ENCODE measurements at regions of chr15 and their contacts with region 1.

Region 1: DNA sequence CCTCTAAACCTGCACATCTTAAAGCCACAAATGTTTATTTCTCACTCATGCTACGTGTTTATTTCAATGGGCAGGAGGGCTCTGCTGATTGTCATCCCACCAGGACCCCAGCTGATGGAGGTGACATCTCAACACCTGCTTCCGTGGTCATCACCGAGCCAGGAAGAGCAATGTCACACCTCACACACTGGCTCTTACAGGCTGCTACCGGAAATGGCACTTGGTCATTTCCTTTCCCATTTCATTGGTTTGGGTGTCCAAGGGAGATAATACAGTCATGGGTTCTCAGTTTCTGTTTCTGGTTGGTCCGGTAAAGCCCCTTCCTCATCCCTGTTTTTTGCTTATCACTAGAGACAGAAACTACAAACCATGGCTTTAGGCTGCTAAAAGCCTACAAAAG is 41.9 kb downstream of the ABHD2 start:
- DNase-seq: no peak
- H3K4me3 ChIP-seq: no peak overlapping the region
- H3K27ac ChIP-seq: peak overlapping the region; percentile 3 to 39
- H3K4me1 ChIP-seq: peaks cover 0 to 94% (median 18%) of the 10 kb centered on the region in 4 donors
- H3K27me3 ChIP-seq: no peaks in the 10 kb centered on the region
- CTCF ChIP-seq: no peak

Region 2: DNA sequence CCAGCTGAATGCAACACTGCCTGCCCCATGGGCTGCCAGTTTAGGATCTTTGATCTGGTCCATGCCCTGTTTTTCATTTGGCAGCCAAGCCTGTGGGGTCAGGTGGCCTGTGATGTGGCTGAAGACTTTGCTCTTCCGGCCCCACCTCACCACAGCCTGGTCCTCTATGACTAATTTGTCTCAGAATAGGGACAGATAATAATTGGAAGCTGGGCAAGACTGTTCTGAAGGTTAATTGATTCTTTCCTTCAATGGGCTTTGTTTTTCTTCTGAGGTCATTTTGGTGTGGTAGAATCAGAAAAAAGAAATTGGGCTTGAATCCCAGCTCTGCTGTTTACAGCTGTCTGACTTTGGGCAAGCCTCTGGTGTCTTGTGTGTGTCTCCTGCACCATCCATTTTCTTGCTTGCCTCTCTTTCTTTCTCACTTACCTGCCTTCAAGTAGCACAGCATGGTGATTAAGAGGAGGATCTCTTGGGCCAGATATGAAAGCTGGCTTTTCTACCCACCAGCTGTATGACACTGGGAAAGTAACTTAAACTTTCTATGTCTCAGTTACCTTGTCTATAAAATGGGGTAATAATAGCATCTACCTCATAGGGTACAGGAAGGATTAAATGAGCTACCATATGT is 17.7 kb before region 1 on chr15:
- intact Hi-C with region 1: no loop called
- DNase-seq: peak; percentile 68 to 81
- H3K4me3 ChIP-seq: no peak overlapping the region
- H3K27ac ChIP-seq: peak overlapping the region; percentile 83 to 98
- H3K4me1 ChIP-seq: peaks cover 7 to 88% (median 72%) of the 10 kb centered on the region in 4 donors
- H3K27me3 ChIP-seq: no peaks in the 10 kb centered on the region
- CTCF ChIP-seq: no peak

Region 3: DNA sequence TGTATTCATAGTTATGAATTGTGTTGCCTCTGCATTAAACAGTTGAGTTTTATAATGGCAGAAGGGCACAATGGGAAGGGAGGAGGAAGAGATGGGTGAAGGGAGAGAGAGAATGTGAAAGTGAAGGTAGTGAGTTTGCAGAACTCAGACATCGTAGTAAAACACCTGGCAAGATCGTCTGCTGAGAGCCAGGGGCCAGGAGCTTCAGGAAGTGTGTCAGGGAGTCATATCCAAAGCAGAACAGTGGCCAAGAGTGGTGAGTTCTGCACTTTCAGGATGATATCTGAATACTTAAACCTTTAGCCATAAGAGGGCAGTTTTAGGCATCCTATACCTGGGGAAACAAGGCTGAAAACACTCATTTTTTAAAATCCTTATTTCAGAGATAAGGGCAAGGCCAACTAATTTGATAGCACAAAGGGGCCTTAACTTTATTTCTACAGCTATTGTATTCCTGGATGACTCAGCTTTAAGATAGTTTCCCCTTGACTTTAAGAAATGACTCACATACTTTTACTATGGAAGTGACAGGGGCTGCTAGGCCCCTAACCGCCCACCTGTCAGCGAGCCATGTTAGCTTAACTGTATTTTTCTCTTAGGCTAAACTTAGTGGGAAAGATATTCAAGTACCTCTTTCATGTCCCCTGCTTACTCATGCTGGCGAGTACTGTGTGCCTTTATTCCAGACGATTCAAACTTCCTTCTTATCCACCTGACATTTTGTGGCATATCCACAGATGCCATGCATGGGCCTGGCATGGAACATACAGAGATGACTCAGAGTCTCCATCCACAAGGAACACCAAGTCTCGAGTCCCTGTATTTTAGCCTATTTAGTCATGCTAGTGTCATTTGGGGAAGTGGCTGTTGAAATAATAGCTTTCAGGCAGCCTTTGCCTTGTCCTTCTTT is 37.3 kb after region 1 on chr15:
- intact Hi-C with region 1: loop called (anchors 5 kb)
- DNase-seq: peak; percentile 37 to 78
- H3K4me3 ChIP-seq: no peak overlapping the region
- H3K27ac ChIP-seq: peak overlapping the region; percentile 70 to 74
- H3K4me1 ChIP-seq: peaks cover 0 to 62% (median 30%) of the 10 kb centered on the region in 4 donors
- H3K27me3 ChIP-seq: no peaks in the 10 kb centered on the region
- CTCF ChIP-seq: no peak